ENCODE measurements at regions of chr2 and their contacts with region 1.

Region 1: DNA sequence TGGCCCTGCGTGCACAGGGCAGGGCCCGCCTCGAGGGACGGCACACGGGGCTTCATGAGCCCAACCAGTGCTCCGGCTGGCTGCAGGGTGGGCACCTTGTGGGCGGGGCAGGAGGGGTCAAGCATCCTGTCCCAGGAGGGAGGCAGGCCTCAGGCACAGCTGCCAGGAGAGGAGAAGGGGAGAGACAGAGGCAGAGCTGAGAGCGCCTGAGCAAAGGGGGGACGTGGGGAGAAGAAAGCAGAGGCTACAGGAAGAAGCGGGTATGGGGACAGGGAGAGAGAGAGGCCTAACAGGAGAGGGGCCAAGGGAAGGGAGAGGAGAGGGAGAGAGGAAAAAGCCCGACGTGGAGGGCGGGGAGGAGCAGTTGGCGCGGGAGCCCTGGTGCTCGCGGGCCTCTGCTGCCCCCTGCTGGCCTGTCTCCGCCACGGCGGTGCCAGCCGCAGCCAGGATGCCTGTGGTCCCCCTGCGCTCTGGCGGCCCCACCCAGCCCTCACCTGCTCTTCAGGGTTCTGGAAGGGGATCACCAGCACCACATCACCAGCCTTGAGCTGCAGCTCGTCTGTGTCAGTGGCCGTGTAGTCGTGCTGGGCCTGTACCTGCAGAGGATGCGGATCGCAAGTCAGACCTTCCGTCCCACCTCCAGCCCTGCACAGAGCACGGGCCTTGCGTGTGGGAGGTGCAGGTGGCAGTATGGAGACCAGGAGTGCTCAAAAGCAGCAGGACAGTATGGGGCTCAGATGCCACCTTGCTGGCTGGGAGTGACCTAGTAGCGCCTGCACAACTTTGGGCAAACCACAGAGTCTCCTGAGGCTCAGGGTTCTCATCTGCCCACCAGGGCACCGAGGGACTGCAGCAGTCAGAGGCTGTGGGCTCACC is 56.8 kb downstream of the BIN1 start:
- H3K4me3 ChIP-seq: no peak overlapping the region
- H3K27ac ChIP-seq: no peak overlapping the region
- H3K4me1 ChIP-seq: no peaks in the 10 kb centered on the region
- CTCF ChIP-seq: peak; percentile 97

Region 2: GRCh38 chr2:127025359-127026166 is 24.6 kb before region 1 on chr2:
- CTCF ChIA-PET with region 1: interaction called, 10 read pairs
- POLR2A ChIA-PET with region 1: interaction called, 7 read pairs
- H3K4me3 ChIP-seq: peak overlapping the region; percentile 52
- H3K27ac ChIP-seq: peak overlapping the region; percentile 26; the same call in 1 of the 2 replicates
- H3K4me1 ChIP-seq: no peaks in the 10 kb centered on the region
- CTCF ChIP-seq: peak; percentile 92

Region 3: DNA sequence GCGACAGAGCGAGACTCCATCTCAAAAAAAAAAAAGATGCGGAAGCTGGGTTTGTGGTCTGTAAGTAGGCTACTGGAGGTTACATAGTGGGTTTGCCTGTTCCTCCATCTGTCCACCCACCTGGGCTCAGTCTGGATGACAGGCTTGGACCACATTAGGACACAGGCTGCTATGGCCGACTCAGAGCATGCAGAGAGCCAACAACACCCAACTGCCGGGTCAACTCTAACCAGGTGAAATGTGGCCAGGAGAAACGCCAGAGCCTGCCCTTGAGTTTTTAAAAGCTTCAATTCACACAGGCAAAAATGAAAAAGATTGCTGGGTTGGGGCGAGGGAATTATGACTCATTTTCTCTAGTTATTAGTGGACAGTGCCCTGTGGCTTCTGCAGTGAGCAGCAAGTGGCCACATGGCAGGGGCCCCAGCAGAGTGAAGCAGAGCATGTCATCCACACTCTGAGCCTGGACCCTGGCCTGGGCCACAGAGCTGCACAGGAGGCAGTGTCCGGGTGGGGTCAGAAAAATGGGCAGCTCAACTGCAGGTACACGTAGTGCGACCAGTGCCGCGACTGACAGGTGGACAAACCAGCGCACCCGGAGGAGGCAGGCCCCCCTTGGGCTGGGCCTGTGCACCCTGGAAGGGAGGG is 10.7 kb before region 1 on chr2:
- CTCF ChIA-PET with region 1: interaction called, 10 read pairs
- POLR2A ChIA-PET with region 1: no interaction called
- H3K4me3 ChIP-seq: no peak overlapping the region
- H3K27ac ChIP-seq: no peak overlapping the region
- H3K4me1 ChIP-seq: no peaks in the 10 kb centered on the region
- CTCF ChIP-seq: no peak